Right ventricle myocardium superior (tissue), 1 donor: ENCODE measurements at regions of chr16 and their contacts with region 1.

Region 1: DNA sequence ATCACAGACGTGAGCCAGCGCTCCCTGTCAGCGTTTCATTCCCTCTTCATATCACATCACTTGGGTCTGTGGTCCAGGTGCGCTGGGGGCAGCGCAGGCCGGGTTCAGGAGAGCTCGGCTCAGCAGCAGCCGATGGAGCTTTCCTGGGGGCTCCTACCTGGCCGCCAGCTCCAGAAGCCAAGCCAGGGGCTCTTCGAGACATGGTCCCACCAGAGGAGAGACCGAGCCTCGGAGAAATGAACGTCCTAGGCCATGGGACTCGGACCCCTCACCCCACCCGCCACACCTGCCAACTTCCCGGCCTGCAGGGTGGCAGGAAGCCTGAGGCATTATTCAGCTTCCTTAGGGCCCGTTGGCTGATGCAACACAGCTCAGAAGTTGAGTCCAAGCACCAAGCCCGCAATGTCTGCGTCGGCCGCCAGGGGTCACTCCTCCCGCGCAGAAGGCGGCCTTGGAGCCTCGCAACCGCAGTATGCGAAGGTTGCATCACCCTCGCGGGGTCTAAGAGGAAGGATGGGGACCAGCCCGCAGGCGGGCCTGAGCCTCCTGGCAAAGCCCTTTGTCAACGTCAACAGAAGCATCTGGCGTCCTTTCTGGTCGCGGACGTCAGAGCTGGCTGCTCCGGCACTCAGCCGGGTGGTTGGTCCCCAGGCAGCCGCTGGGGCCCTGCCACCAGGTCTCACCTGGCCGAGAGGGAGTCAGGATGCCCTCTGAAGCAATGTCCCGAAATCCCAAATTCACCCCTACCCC is 13.2 kb upstream of the KLHDC4 start:
- DNase-seq: peak; percentile 94
- ATAC-seq: peak; percentile 94

Region 2: GRCh38 chr16:86680162-86680561 is 1098.8 kb before region 1 on chr16:
- intact Hi-C with region 1: no loop called
- DNase-seq: no peak
- ATAC-seq: peak; percentile 80

Region 3: DNA sequence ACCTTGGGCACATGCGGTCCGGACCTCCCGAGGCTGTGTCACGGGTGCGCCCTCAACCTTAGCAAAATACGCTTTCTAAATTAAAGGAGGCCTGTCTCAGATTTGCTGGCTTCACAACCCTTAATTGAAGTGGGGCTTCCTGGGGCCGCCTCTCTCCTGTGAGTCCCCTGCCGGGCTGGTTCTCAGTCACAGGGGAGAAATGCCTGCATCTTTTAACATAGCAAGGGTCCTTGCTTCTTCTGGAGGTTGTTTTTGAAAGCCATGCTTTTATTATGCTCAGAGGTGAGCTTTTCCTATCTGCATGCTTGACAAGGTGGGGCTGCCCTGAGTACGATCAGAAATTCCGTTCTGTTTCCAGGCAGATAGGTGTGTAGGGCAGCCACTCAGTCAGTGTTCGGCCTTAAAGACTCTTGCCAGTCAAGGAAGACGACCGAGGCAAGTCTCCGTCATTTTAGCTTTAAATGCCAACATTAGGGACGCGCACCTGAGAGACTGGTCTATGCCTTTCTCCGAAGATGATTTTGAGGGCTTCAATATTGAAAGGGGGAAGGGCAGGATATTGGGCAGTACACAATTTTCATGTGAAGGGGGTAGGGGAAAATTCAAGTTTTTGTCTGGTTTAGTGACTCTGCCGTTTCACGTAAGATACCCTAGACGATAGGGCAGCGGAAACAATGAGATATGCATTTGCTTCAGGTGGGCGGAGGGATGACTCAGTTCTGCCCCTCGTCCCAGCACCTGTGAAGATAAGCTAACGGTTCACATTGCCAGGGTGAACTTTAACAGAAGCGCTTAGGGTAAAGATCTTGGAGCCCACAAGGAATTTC is 95.8 kb after region 1 on chr16:
- intact Hi-C with region 1: loop called (anchors 1 kb)
- DNase-seq: no peak
- ATAC-seq: no peak

Region 4: DNA sequence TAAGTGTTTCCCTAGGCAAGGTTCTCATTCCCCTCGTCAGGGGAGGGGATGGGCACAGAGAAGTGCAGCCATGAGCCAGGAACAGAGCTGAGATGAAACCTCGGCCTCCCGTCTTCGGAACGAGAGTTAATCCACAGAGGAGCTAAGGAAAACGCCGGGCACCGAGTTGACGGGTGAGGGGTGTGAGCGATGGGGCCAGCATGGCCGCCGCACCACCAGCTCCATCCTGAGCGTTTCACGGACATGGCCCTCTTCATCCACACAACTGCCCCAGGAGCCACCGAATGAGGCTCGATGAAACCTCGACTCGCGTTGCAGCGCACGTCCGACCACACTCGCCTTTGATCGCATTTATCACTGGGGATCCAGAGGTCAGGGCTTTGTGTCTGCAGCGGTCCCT is 135.8 kb after region 1 on chr16:
- intact Hi-C with region 1: no loop called
- DNase-seq: no peak
- ATAC-seq: no peak